Activated CD4-positive, alpha-beta T cell treated with anti-CD3 and anti-CD28 coated beads, Interleukin-2, amount 10 ng/mL, durations not matched to agents 7 days and 5 days (primary cell): ENCODE measurements at regions of chr2 and their contacts with region 1.

Region 1: GRCh38 chr2:70124983-70125480 is 37.8 kb downstream of the PCBP1 start:
- DNase-seq: peak; percentile 58
- H3K4me3 Mint-ChIP-seq: peak overlapping the region; percentile 93
- H3K27ac Mint-ChIP-seq: peak overlapping the region; percentile 100
- H3K4me1 Mint-ChIP-seq: peaks cover 78% of the 10 kb centered on the region
- H3K27me3 Mint-ChIP-seq: no peaks in the 10 kb centered on the region

Region 2: DNA sequence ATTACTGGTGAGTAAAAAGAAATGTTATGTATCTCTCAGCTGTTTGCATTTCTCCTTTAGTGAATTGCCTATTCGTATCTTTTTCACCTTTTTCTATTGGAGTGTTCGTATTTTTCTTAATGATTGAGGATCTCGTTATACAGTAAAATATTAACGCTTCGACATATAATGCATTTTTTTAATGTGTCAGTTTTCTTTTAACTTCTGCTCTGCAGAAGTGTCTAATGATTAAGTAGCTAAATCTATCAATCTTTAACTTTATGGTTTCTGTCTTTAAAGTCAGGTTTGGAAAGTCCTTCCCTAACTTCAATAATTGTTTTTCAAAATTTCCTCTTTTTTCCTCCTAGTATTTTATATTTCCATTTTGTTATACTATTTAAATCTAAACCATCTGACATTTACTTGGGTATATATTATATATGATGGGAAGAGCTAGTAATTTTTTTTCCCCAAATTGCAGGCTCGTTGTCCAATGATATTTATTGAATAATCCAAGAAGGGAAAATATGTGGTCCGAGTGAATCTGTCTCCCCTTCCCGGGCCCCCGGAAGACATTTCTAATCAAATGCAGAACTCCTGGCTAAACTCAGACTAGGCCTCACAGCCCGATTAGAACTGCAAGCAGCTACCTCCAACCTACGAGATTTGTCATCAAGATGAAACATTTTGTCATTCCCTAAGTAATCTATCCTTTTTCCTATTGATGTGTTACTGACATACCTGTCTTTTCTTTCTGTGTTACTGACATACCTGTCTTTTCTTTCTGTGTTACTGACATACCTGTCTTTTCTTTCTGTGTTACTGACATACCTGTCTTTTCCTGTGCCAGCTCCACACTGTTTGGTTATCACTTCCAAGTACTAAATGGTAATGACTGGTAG is 20.6 kb before region 1 on chr2:
- CTCF ChIA-PET with region 1: interaction called, 4 read pairs
- POLR2A ChIA-PET with region 1: interaction called, 12 read pairs
- DNase-seq: peak; percentile 45
- H3K4me3 Mint-ChIP-seq: peak overlapping the region; percentile 72
- H3K27ac Mint-ChIP-seq: peak overlapping the region; percentile 92
- H3K4me1 Mint-ChIP-seq: peaks cover 57% of the 10 kb centered on the region
- H3K27me3 Mint-ChIP-seq: no peaks in the 10 kb centered on the region

Region 3: GRCh38 chr2:70137519-70137918 is 12.5 kb after region 1 on chr2:
- CTCF ChIA-PET with region 1: interaction called, 18 read pairs
- POLR2A ChIA-PET with region 1: interaction called, 7 read pairs
- DNase-seq: peak; percentile 52
- H3K4me3 Mint-ChIP-seq: peak overlapping the region; percentile 48
- H3K27ac Mint-ChIP-seq: peak overlapping the region; percentile 97
- H3K4me1 Mint-ChIP-seq: peaks cover 80% of the 10 kb centered on the region
- H3K27me3 Mint-ChIP-seq: no peaks in the 10 kb centered on the region

Region 4: GRCh38 chr2:70214953-70215549 is 90.0 kb after region 1 on chr2:
- CTCF ChIA-PET with region 1: no interaction called
- POLR2A ChIA-PET with region 1: no interaction called
- DNase-seq: no peak
- H3K4me3 Mint-ChIP-seq: no peak overlapping the region
- H3K27ac Mint-ChIP-seq: no peak overlapping the region
- H3K4me1 Mint-ChIP-seq: peaks cover 24% of the 10 kb centered on the region
- H3K27me3 Mint-ChIP-seq: no peaks in the 10 kb centered on the region

Region 5: DNA sequence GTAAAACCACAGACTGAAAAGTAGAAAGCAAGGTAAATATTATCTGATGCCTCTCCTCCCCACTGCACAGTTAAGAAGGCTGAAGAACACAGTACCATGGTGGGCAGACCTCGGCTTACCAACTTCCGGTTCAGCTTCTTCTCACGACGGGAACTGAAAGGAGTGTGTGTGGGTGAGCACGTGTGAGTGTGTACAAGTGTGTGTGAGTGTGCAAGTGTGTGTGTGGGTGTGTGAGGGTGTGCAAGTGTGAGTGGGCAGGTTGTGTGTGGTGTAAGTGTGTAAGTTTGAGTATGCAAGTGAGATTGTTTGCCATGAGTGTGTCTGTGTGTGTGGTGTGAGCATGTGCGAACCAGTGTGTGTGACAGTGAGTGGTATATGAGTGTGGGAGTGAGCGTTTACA is 539.5 kb after region 1 on chr2:
- CTCF ChIA-PET with region 1: no interaction called
- POLR2A ChIA-PET with region 1: no interaction called
- DNase-seq: peak; percentile 47
- H3K4me3 Mint-ChIP-seq: no peak overlapping the region
- H3K27ac Mint-ChIP-seq: no peak overlapping the region
- H3K4me1 Mint-ChIP-seq: peaks cover 19% of the 10 kb centered on the region
- H3K27me3 Mint-ChIP-seq: no peaks in the 10 kb centered on the region